Activated naive CD4-positive, alpha-beta T cell treated with anti-CD3 and anti-CD28 coated beads, Interleukin-2, amount 10 ng/mL, durations not matched to agents 7 days and 5 days (primary cell): ENCODE measurements at regions of chr6 and their contacts with region 1.

Region 1: GRCh38 chr6:41735427-41736356 is at the start of gene TFEB:
- DNase-seq: peak; percentile 96
- H3K4me3 Mint-ChIP-seq: peak within 1 kb of the TSS; percentile 83
- H3K27ac Mint-ChIP-seq: peak within 1 kb of the TSS; percentile 86
- H3K4me1 Mint-ChIP-seq: peaks cover 34% of the 10 kb centered on the region
- H3K27me3 Mint-ChIP-seq: peaks cover 18% of the 10 kb centered on the region

Region 2: GRCh38 chr6:41705996-41706835 is 29.5 kb before region 1 on chr6:
- CTCF ChIA-PET with region 1: interaction called, 30 read pairs
- DNase-seq: peak; percentile 76
- H3K4me3 Mint-ChIP-seq: peak overlapping the region; percentile 42
- H3K27ac Mint-ChIP-seq: peak overlapping the region; percentile 80
- H3K4me1 Mint-ChIP-seq: peaks cover 46% of the 10 kb centered on the region
- H3K27me3 Mint-ChIP-seq: no peaks in the 10 kb centered on the region

Region 3: GRCh38 chr6:41747256-41748101 is 11.8 kb after region 1 on chr6 and contains the start of gene PGC:
- CTCF ChIA-PET with region 1: no interaction called
- DNase-seq: no peak
- H3K4me3 Mint-ChIP-seq: no peak within 1 kb of the TSS
- H3K27ac Mint-ChIP-seq: no peak within 1 kb of the TSS
- H3K4me1 Mint-ChIP-seq: no peaks in the 10 kb centered on the region
- H3K27me3 Mint-ChIP-seq: peaks cover 26% of the 10 kb centered on the region